Gastrocnemius medialis (tissue), 4 donors: ENCODE measurements at regions of chr11 and their contacts with region 1.

Region 1: DNA sequence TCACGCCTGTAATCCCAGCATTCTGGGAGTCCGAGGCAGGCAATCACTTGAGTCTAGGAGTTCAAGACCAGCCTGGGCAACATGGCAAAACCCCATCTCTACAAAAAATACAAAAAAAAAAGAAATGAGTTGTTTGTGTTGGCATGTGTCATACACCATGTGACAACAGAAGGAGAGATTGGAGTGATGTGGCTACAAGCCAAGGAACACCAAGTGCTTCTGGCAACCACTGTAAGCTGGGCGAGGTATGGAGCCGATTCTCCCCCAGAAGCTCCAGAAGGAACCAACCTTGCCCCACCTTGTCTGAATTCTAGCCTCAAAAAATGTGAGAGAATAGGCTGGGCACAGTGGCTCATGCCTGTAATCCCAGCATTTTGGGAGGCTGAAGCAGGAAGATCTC is 39.1 kb upstream of the SLC35C1 start:
- DNase-seq: no peak
- ATAC-seq: peak in 1 of 2 donors; percentile 55
- H3K4me3 ChIP-seq: no peak overlapping the region
- H3K27ac ChIP-seq: peak overlapping the region in 3 of 4 donors; percentile 31 to 77 (median 55)
- H3K4me1 ChIP-seq: peaks cover 0 to 22% of the 10 kb centered on the region in 2 donors
- H3K27me3 ChIP-seq: no peaks in the 10 kb centered on the region
- CTCF ChIP-seq: no peak
- POLR2A ChIP-seq: no peak

Region 2: DNA sequence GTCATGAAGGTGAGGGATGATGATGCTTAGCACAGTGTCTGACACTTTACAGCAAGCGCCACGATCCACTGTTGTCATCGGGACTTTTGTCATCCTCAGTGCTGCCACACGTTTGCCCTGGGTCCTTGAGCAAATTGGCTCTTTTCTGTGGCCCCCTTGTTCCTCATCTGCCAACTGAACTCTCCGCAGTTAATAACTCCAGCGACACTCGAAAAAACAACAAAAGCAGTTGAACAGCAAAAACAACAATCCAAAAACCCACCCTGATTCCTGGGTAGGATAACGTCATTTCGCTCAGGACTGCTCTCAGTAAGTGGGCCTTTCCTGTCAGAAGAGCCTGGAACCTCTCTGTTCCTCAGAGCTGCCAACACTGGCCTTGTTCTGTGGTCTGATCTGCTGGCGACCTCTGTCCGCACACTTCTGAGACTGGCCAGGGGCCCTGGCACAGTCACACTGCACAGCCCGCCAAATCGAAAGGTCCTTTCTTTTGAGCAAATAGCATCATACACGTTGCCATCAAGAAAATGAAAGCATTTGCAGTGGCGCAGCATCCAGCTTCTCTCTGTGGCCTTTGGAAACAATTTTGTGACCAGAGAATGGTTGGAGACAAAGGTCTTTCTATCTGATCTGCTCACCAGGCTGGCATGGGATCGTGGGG is 399.7 kb before region 1 on chr11:
- in situ Hi-C with region 1: loop called (anchors 10 kb)
- intact Hi-C with region 1: no loop called
- DNase-seq: no peak
- ATAC-seq: no peak
- H3K4me3 ChIP-seq: no peak overlapping the region
- H3K27ac ChIP-seq: no peak overlapping the region
- H3K4me1 ChIP-seq: no peaks in the 10 kb centered on the region
- H3K27me3 ChIP-seq: no peaks in the 10 kb centered on the region
- CTCF ChIP-seq: no peak
- POLR2A ChIP-seq: no peak

Region 3: GRCh38 chr11:45638051-45638450 is 127.8 kb before region 1 on chr11:
- in situ Hi-C with region 1: no loop called
- intact Hi-C with region 1: no loop called
- DNase-seq: no peak
- ATAC-seq: no peak
- H3K4me3 ChIP-seq: no peak overlapping the region
- H3K27ac ChIP-seq: no peak overlapping the region
- H3K4me1 ChIP-seq: no peaks in the 10 kb centered on the region
- H3K27me3 ChIP-seq: peaks cover 0 to 12% (median 0%) of the 10 kb centered on the region in 3 donors
- CTCF ChIP-seq: no peak
- POLR2A ChIP-seq: no peak